Ovary (tissue), 10 donors: ENCODE measurements at regions of chr14 and their contacts with region 1.

Region 1: DNA sequence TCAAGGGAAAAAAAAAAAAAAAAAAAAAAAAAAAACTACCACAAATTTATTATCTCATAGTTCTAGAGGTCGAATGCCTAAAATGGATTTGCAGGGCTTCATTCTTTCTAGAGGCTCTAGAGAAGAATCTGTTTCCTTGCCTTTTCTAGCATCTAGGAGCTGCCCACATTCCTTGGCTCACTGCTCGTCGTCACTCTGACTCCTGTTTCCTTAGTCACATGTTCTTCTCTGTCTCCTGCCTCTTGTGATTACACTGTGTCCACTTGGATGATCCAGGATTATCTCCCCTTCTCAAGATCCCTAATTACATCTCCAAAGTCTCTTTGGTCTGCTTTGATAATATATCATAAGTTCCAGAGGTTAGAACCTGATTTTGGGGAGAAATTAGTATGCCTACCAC is 88.7 kb downstream of the HECTD1 start:
- DNase-seq: no peak
- H3K4me3 ChIP-seq: no peak overlapping the region
- H3K27ac ChIP-seq: no peak overlapping the region
- H3K4me1 ChIP-seq: no peaks in the 10 kb centered on the region
- H3K27me3 ChIP-seq: no peaks in the 10 kb centered on the region
- CTCF ChIP-seq: no peak
- EP300 ChIP-seq: no peak
- POLR2A ChIP-seq: no peak

Region 2: DNA sequence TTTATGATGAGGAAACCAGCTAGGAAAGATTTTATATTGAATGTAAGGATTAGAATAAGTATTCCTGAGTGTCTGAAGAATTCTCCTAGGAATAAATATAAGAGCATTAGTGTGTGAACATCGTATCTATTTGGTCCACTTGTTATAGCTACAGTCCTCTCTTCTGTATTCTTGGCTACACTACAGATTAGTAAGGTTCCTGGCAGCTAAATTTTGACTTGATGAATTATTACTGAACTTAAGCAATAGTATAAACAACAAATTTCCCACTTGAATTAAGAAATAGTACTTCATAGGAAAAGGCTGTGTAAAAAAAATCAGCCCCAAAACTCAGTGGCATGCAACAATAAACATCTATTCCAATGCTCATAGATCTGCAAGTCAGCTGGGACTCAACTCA is 698.4 kb before region 1 on chr14:
- intact Hi-C with region 1: no loop called
- DNase-seq: no peak
- H3K4me3 ChIP-seq: no peak overlapping the region
- H3K27ac ChIP-seq: no peak overlapping the region
- H3K4me1 ChIP-seq: no peaks in the 10 kb centered on the region
- H3K27me3 ChIP-seq: no peaks in the 10 kb centered on the region
- CTCF ChIP-seq: no peak
- EP300 ChIP-seq: no peak
- POLR2A ChIP-seq: no peak

Region 3: DNA sequence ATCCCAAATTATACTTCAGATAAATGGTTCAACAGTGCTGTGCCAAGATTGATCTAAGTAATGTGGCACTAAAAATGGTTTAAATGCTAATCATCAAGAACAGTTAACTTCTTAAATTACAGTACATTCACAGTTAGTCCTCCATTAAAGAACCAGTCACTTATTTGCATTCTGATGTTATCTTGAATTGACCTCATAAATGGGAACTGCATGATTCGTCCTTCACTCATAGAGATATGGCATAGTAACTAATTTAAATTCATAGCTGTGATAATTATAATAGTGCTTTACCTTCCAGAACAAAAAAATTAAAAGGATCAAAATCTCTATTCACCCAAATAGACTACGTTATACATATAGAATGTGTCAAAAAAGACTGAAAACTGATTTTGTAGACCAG is 183.4 kb before region 1 on chr14:
- intact Hi-C with region 1: no loop called
- DNase-seq: no peak
- H3K4me3 ChIP-seq: no peak overlapping the region
- H3K27ac ChIP-seq: no peak overlapping the region
- H3K4me1 ChIP-seq: no peaks in the 10 kb centered on the region
- H3K27me3 ChIP-seq: no peaks in the 10 kb centered on the region
- CTCF ChIP-seq: no peak
- EP300 ChIP-seq: no peak
- POLR2A ChIP-seq: no peak

Region 4: GRCh38 chr14:31166271-31166710 is 47.4 kb after region 1 on chr14:
- intact Hi-C with region 1: loop called in 1 of 4 experiments (anchors 2 kb)
- DNase-seq: no peak
- H3K4me3 ChIP-seq: no peak overlapping the region
- H3K27ac ChIP-seq: no peak overlapping the region
- H3K4me1 ChIP-seq: peaks cover 1% of the 10 kb centered on the region
- H3K27me3 ChIP-seq: no peaks in the 10 kb centered on the region
- CTCF ChIP-seq: no peak
- EP300 ChIP-seq: no peak
- POLR2A ChIP-seq: no peak